ENCODE measurements at regions of chrX and their contacts with region 1.

Region 1: DNA sequence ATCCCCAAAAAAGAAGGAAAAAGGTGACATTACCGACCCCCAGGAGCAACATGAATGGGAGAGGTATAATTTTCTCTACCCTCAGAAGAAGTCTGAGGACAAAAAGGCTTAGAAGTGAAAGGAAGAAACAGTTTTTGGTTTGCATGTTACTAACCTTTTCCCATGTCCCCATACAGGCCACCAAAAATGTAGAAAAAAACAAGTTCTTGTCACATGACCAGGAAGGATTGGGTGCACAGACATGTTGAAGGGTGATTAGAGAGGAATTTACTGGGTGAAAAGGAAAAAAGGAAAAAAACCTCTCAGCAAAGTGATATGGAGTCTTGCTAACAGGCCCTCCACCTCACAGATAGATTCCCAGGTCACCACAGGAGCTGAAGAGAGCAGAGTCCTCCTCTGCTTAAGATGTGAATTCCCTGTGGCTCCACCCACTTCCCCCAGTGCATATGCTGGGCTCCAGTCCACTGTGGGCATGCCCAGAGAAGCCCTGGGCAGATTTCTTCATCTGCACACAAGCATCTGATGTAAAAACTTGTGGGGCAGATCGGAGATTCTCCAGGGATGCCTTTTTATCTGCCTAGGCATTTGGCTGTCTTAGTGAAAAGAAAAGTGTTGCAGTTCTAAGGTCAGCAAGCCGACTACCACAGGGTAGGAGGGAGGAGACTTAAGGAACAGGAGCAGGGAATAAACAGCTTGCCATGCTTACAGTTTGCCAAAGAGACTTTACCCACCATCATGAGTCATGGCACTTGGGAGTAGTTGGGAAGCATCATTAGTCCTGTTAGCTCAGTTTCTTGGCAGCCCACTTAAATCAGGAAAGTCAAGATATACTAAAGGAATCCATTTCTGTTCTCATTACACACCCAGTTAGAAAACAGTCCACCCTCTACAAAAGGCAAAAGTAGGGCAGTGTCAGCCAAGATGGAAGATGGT is 25.0 kb upstream of the PASD1 start:
- DNase-seq: peak; percentile 35
- ATAC-seq: peak; percentile 88
- H3K4me3 ChIP-seq: peak overlapping the region; percentile 69 to 84 (median 71)
- H3K27ac ChIP-seq: peak overlapping the region; percentile 89
- H3K4me1 ChIP-seq: peaks cover 18% of the 10 kb centered on the region
- H3K27me3 ChIP-seq: no peaks in the 10 kb centered on the region
- CTCF ChIP-seq: no peak
- EP300 ChIP-seq: no peak
- POLR2A ChIP-seq: peak; percentile 69 to 71; a peak in 3 of 4 replicates
- RAD21 ChIP-seq: no peak

Region 2: GRCh38 chrX:150913511-150913910 is 624.9 kb before region 1 on chrX:
- CTCF ChIA-PET with region 1: no interaction called
- POLR2A ChIA-PET with region 1: no interaction called
- in situ Hi-C with region 1: no loop called
- intact Hi-C with region 1: no loop called
- DNase-seq: no peak
- ATAC-seq: no peak
- H3K4me3 ChIP-seq: no peak overlapping the region
- H3K27ac ChIP-seq: no peak overlapping the region
- H3K4me1 ChIP-seq: no peaks in the 10 kb centered on the region
- H3K27me3 ChIP-seq: no peaks in the 10 kb centered on the region
- CTCF ChIP-seq: no peak
- EP300 ChIP-seq: no peak
- POLR2A ChIP-seq: no peak
- RAD21 ChIP-seq: no peak

Region 3: DNA sequence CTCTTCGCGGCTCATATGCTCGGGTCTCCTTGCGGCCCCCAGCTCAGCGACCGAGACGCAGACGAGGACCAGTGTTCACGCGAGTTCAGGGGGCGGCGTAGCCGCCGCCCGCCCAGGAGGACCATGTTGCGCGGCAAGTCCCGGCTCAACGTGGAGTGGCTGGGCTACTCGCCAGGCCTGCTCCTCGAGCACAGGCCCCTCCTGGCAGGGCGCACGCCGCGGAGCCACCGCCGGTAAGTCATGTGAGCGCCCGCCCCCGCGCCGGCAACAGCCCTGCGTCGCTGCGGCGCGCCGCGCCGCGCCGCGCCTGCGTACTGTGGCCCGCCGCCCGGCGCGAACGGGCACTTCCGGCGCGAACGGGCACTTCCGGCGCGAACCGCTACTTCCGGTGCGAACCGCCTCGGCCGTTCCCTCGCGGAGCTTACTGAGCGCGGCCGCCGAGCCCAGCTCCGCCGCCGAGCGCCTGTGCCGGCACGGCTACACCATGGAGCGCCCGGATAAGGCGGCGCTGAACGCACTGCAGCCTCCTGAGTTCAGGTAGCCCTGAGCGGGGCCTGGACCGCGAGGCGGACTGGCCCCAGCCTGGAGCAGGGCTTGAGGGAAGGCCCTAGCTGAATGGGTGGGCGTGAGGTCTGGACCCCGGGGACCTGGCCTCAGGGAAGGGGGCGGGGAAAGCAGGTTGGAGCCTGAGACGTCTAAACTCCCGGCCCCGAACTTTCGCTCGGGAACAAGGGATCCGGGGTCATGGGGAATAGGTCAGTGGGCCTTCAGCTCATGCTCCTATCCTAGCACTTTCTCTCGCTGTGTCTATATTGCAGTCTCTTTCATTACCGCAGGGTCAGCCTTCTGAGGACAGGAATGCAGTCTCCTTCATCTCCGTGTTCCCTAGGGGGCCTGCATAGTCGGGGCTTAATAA is 141.4 kb before region 1 on chrX and contains the start of gene VMA21:
- CTCF ChIA-PET with region 1: no interaction called
- POLR2A ChIA-PET with region 1: interaction called, 12 read pairs
- in situ Hi-C with region 1: no loop called
- intact Hi-C with region 1: no loop called
- DNase-seq: peak; percentile 64
- ATAC-seq: peak; percentile 91
- H3K4me3 ChIP-seq: peak within 1 kb of the TSS; percentile 63 to 87 (median 79)
- H3K27ac ChIP-seq: peak within 1 kb of the TSS; percentile 96
- H3K4me1 ChIP-seq: peaks cover 35% of the 10 kb centered on the region
- H3K27me3 ChIP-seq: no peaks in the 10 kb centered on the region; a peak in 1 of 5 replicates
- CTCF ChIP-seq: no peak
- EP300 ChIP-seq: no peak
- POLR2A ChIP-seq: peak; percentile 70 to 76
- RAD21 ChIP-seq: no peak
- total RNA-seq, gene VMA21: 42.4 and 53.0 TPM in 2 replicates

Region 4: DNA sequence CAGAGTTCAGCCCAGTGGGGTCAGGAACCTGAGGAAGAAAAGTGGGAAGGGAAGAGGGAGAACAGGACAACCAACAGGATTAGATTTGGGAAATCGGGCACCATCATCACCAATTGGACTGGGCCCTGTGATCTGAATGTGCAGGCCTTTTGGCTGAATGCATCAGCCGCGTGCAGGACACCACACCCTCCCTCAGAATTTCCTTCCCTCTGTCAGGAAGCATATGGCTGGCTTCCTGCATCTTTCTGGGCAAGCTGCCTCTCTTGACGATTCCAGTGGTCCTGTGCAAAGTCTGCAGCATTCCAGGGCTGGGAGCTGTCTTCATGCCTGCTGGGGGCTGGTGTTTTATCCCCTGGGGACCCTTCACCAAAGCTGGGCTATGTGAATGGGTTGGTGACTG is 390.7 kb after region 1 on chrX:
- CTCF ChIA-PET with region 1: no interaction called
- POLR2A ChIA-PET with region 1: no interaction called
- in situ Hi-C with region 1: no loop called
- intact Hi-C with region 1: no loop called
- DNase-seq: no peak
- ATAC-seq: no peak
- H3K4me3 ChIP-seq: no peak overlapping the region
- H3K27ac ChIP-seq: no peak overlapping the region
- H3K4me1 ChIP-seq: no peaks in the 10 kb centered on the region
- H3K27me3 ChIP-seq: 0 out of 5 replicates have a peak, but pooled peaks cover 0 to 4% of the 10 kb centered on the region in 2 experiments
- CTCF ChIP-seq: no peak
- EP300 ChIP-seq: no peak
- POLR2A ChIP-seq: no peak
- RAD21 ChIP-seq: no peak

Region 5: DNA sequence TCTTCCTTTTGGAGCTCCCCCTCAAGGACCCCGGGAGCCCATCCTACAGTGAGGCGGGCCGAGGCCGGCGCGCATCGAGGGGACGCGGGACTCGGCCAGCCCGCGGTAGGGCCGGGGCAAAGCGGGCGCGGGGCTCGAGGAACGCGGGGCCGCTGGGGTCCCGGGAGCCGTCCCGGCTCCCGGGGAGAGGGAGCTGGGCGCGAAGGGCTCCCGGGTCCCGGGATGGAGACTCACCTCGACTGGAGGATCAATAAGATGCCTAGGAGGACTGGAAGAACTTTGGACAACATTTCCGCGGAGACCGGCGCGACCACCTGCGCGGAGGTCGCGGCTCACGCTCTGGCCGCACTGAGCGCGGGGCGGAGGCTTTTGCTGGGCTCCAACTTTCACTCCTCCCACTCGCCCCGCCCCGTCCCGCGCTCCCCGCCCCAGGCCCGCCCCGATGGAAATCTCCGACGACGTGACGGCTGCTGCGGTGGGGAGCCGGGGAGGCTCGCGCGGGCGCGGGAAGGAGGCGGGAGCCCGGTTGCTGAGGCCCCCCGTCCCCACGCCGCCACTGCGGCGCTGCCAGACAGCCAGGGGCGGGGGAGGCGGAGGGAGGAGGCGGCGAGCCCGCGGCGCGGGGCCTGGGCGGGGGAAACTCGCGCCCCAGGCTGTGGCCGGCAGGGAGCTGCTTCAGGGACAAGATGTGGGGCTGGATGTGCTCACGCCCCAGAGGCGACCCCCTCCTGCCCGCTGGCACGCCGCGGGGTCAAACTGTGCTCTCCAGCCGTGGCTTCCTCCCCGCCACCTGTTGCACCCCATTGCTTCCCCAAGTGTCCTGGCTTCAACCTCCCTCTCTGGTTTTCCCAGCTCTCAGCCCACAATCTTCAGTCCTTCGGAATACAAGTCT is 436.1 kb after region 1 on chrX and contains the start of gene GABRE:
- CTCF ChIA-PET with region 1: no interaction called
- POLR2A ChIA-PET with region 1: no interaction called
- in situ Hi-C with region 1: no loop called
- intact Hi-C with region 1: loop called (anchors 10 kb)
- DNase-seq: no peak
- ATAC-seq: peak; percentile 71
- H3K4me3 ChIP-seq: peak within 1 kb of the TSS; percentile 68 to 78 (median 77)
- H3K27ac ChIP-seq: peak within 1 kb of the TSS; percentile 59
- H3K4me1 ChIP-seq: peaks cover 40% of the 10 kb centered on the region
- H3K27me3 ChIP-seq: no peaks in the 10 kb centered on the region; a peak in 1 of 5 replicates
- CTCF ChIP-seq: no peak
- EP300 ChIP-seq: no peak
- POLR2A ChIP-seq: peak; percentile 93 to 94
- RAD21 ChIP-seq: no peak
- total RNA-seq, gene GABRE: 2.6 and 12.2 TPM in 2 replicates

Measured in HepG2 (cell line).